Activated naive CD4-positive, alpha-beta T cell treated with anti-CD3 and anti-CD28 coated beads for 36 hours (primary cell): ENCODE measurements at regions of chr15 and their contacts with region 1.

Region 1: DNA sequence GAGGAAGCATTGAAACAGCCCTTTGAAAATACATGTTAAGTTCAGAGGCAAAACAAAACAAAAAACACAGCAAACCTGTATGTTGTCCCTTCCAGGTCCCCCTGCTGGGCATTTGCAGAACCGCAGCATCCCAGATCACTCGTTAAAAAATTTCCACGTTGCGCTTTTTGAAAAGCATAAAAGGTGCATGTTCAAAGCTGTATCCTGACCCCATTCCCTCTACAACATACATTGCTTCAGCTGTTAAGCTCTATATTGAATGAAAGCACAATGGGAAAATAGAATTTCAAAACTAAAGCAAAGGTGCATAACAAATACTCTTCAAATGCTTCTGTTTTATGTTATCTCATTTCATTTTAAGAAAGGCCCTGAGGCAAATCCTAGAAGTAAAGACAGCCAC is 328.3 kb downstream of the THSD4 start:
- DNase-seq: peak; percentile 57
- H3K4me3 Mint-ChIP-seq: no peak overlapping the region
- H3K27ac Mint-ChIP-seq: no peak overlapping the region
- H3K4me1 Mint-ChIP-seq: no peaks in the 10 kb centered on the region
- H3K27me3 Mint-ChIP-seq: peaks cover 5% of the 10 kb centered on the region

Region 2: GRCh38 chr15:70670680-70671079 is 772.9 kb before region 1 on chr15:
- CTCF ChIA-PET with region 1: interaction called, 3 read pairs
- intact Hi-C with region 1: loop called (anchors 5 kb)
- DNase-seq: no peak
- H3K4me3 Mint-ChIP-seq: no peak overlapping the region
- H3K27ac Mint-ChIP-seq: no peak overlapping the region
- H3K4me1 Mint-ChIP-seq: peaks cover 15% of the 10 kb centered on the region
- H3K27me3 Mint-ChIP-seq: no peaks in the 10 kb centered on the region

Region 3: GRCh38 chr15:70826634-70827033 is 616.9 kb before region 1 on chr15:
- CTCF ChIA-PET with region 1: interaction called, 3 read pairs
- intact Hi-C with region 1: loop called (anchors 2 kb)
- DNase-seq: no peak
- H3K4me3 Mint-ChIP-seq: no peak overlapping the region
- H3K27ac Mint-ChIP-seq: no peak overlapping the region
- H3K4me1 Mint-ChIP-seq: no peaks in the 10 kb centered on the region
- H3K27me3 Mint-ChIP-seq: peaks cover 5% of the 10 kb centered on the region

Region 4: GRCh38 chr15:70974004-70974832 is 469.3 kb before region 1 on chr15:
- CTCF ChIA-PET with region 1: no interaction called
- intact Hi-C with region 1: loop called (anchors 1 kb)
- DNase-seq: no peak
- H3K4me3 Mint-ChIP-seq: no peak overlapping the region
- H3K27ac Mint-ChIP-seq: no peak overlapping the region
- H3K4me1 Mint-ChIP-seq: no peaks in the 10 kb centered on the region
- H3K27me3 Mint-ChIP-seq: no peaks in the 10 kb centered on the region

Region 5: DNA sequence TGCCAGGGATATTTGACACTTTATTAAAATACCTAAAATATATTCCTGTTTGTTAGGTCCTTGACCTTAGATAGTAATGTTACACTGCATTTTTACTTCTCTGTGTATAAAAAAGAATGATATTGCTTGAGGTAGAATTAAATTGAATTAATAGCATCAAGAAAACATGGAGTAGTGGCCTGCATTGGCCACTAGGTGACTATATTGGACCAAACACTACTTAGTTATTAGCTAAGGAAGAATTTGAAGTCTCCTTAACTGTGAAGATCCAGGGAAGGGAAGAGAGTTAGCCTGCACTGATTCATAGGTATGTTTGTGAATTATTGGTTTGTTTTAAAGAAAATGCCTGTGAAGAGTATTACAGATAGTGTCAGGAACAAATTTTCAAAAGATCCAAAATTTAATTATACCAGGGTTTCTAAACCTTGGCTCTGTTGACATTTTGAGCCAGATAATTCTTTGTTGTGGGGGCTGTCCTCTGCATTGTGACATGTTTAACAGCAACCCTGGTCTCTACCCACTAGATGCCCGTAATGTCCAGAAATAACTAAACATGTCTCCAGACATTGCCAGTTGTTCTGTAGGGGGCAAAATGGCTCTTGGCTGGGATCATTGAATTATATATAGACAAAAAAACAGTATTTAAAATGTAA is 431.9 kb before region 1 on chr15:
- CTCF ChIA-PET with region 1: no interaction called
- intact Hi-C with region 1: loop called (anchors 1 kb)
- DNase-seq: peak; percentile 7
- H3K4me3 Mint-ChIP-seq: no peak overlapping the region
- H3K27ac Mint-ChIP-seq: no peak overlapping the region
- H3K4me1 Mint-ChIP-seq: no peaks in the 10 kb centered on the region
- H3K27me3 Mint-ChIP-seq: peaks cover 21% of the 10 kb centered on the region

Region 6: DNA sequence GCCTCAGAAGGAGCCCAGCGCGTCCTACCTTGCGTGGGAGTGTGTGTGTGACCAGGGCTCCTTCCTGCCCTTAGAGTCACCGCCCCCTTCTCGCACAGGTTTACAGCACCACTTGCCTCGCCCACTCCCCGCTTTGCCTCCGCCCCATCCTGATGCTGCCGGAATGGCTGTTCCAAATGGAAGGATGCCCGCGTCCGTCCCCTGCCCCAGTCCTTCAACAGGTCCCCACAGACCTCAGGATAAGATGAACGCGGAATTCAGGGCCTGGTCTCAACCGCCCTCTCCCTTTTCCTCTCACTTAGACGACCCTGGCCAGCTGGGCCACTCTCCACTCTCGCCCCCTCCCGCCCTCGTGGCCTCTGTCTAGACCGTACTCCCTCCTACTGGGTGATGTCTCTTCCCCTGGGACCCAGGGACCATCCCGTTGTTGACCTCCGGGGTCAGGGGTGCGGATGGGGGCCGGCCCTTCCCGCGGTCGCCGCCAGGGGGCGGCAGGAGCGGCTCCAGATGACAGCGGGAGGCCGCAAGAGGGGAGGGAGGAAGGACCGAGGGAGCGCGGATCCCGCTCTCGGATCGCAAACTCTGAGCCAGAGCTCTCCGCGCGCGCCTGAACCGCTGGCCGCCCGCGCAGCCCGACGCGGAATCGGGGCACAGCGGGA is 328.5 kb before region 1 on chr15 and contains the start of gene THSD4:
- CTCF ChIA-PET with region 1: interaction called, 7 read pairs
- intact Hi-C with region 1: loop called (anchors 1 kb)
- DNase-seq: peak; percentile 68
- H3K4me3 Mint-ChIP-seq: peak within 1 kb of the TSS; percentile 71
- H3K27ac Mint-ChIP-seq: no peak within 1 kb of the TSS
- H3K4me1 Mint-ChIP-seq: peaks cover 4% of the 10 kb centered on the region
- H3K27me3 Mint-ChIP-seq: peaks cover 39% of the 10 kb centered on the region
- total RNA-seq, gene THSD4: not detected

Region 7: GRCh38 chr15:71386448-71387236 is 56.9 kb before region 1 on chr15:
- CTCF ChIA-PET with region 1: interaction called, 19 read pairs
- intact Hi-C with region 1: loop called (anchors 1 kb)
- DNase-seq: no peak
- H3K4me3 Mint-ChIP-seq: no peak overlapping the region
- H3K27ac Mint-ChIP-seq: no peak overlapping the region
- H3K4me1 Mint-ChIP-seq: peaks cover 8% of the 10 kb centered on the region
- H3K27me3 Mint-ChIP-seq: peaks cover 11% of the 10 kb centered on the region